ENCODE measurements at regions of chr6 and their contacts with region 1.

Region 1: GRCh38 chr6:7389451-7390225 is at the starts of genes CAGE1 and RIOK1:
- DNase-seq: peak; percentile 96
- H3K4me3 ChIP-seq: peak within 1 kb of the TSS; percentile 63 to 91 (median 80)
- H3K27ac ChIP-seq: peak within 1 kb of the TSS; percentile 92 to 97 (median 95)
- H3K4me1 ChIP-seq: peaks cover 7 to 31% (median 18%) of the 10 kb centered on the region in 4 donors
- H3K27me3 ChIP-seq: no peaks in the 10 kb centered on the region
- CTCF ChIP-seq: peak in 3 of 5 experiments; percentile 15 to 43 (median 29)
- EP300 ChIP-seq: no peak
- POLR2A ChIP-seq: peak; percentile 94
- total RNA-seq, gene CAGE1: not detected
- total RNA-seq, gene RIOK1: 9.8 to 66.5 (median 23.9) TPM

Region 2: DNA sequence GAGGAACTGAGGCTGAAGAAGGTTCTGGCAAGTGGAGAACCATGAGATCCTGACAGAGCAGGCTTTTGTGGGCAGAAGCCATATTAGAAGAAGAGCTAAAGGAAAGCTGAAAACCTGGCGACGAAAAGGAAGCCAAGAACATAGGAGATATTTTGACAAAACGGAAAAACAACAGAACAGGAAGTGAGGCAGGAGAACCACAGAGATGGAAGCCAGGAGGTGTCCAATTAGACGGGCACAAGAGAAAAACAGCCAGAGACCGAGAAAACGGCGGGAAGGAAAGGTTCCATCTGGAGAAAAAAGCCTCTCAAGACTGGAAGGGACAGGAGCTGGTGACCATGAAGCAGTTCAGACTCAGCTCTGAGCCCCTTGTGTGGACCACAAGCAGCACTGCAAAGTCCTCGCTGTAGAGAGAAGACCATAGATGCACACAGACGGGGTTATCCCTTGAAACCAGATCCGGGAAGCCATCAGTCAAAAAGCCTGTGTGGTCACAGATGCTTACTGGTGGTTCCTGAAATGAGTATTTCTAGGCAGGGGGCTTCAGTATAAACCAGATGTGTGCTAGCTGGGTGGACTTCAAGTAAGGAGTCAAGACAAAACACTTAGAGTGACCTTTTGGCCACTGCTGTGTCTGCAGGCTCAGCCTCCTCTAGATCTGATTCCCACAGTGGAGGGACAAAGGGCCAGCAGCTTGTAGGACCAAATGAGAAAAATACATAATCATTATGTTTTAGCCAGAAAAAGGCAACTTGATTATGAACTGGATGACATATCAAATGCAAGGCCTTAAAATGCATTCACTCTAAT is 107.3 kb before region 1 on chr6:
- in situ Hi-C with region 1: loop called in 1 of 4 experiments (anchors 25 kb)
- intact Hi-C with region 1: no loop called
- DNase-seq: no peak
- H3K4me3 ChIP-seq: no peak overlapping the region
- H3K27ac ChIP-seq: no peak overlapping the region
- H3K4me1 ChIP-seq: peaks cover 0 to 3% (median 0%) of the 10 kb centered on the region in 4 donors
- H3K27me3 ChIP-seq: no peaks in the 10 kb centered on the region
- CTCF ChIP-seq: no peak
- EP300 ChIP-seq: no peak
- POLR2A ChIP-seq: no peak

Region 3: DNA sequence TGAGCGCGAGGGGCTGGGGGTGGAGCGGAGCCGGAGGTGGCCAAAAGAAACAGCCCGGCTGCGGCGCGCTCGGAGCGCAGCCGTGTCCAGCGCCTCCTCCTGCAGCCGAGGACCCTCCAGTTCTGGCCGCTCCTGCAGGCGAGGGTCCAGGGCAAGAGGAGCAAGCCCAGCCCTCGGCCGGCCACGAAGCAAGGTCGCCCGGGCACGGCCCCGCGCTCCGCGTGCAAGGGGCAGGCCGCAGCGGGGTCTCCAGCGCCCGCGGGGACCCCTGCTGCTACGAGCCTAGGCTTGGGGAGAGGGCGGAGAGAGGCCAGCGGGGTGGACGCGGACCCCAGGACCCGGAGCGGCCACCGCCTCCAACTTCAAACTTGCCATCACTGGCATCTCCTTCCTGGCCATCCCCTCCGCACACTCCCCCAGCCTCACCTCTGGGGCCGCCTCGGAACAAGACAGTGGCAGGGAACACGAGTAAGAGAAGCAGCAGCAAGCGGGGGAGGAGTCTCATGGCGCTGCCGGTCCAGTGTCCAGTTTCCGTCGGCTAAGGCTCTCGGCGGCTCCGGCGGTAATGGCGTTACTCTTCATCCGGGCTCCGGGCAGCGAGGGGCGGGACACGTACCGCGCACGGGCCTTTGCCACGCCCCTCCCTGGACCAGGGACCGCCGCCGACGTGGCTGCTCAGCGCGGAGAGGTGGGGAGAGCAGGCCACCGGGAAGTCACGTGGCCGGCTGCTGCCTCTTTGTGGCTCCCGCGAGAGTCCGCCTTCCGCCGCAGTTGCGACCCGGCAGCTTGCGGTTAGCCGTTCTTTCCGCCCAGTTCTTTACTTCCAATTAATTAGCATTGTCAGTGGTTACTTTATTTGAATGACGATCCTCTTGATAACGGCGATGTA is 76.8 kb before region 1 on chr6 and contains the start of gene SSR1:
- in situ Hi-C with region 1: no loop called
- intact Hi-C with region 1: loop called (anchors 2 kb)
- DNase-seq: peak; percentile 98
- H3K4me3 ChIP-seq: peak within 1 kb of the TSS; percentile 84 to 93 (median 86)
- H3K27ac ChIP-seq: peak within 1 kb of the TSS; percentile 90 to 98 (median 94)
- H3K4me1 ChIP-seq: peaks cover 9 to 33% (median 18%) of the 10 kb centered on the region in 4 donors
- H3K27me3 ChIP-seq: no peaks in the 10 kb centered on the region
- CTCF ChIP-seq: no peak
- EP300 ChIP-seq: no peak
- POLR2A ChIP-seq: peak; percentile 79
- total RNA-seq, gene SSR1: 12.7 to 68.9 (median 50.3) TPM

Region 4: GRCh38 chr6:7409740-7410139 is 20.1 kb after region 1 on chr6:
- in situ Hi-C with region 1: no loop called
- intact Hi-C with region 1: loop called (anchors 1 kb)
- DNase-seq: no peak
- H3K4me3 ChIP-seq: no peak overlapping the region
- H3K27ac ChIP-seq: peak overlapping the region; percentile 10 to 53 (median 33)
- H3K4me1 ChIP-seq: peaks cover 0 to 32% (median 11%) of the 10 kb centered on the region in 4 donors
- H3K27me3 ChIP-seq: no peaks in the 10 kb centered on the region
- CTCF ChIP-seq: no peak
- EP300 ChIP-seq: no peak
- POLR2A ChIP-seq: no peak

Measured in transverse colon (tissue), 4 donors.